Endothelial cell of umbilical vein (primary cell): ENCODE measurements at regions of chr10 and their contacts with region 1.

Region 1: DNA sequence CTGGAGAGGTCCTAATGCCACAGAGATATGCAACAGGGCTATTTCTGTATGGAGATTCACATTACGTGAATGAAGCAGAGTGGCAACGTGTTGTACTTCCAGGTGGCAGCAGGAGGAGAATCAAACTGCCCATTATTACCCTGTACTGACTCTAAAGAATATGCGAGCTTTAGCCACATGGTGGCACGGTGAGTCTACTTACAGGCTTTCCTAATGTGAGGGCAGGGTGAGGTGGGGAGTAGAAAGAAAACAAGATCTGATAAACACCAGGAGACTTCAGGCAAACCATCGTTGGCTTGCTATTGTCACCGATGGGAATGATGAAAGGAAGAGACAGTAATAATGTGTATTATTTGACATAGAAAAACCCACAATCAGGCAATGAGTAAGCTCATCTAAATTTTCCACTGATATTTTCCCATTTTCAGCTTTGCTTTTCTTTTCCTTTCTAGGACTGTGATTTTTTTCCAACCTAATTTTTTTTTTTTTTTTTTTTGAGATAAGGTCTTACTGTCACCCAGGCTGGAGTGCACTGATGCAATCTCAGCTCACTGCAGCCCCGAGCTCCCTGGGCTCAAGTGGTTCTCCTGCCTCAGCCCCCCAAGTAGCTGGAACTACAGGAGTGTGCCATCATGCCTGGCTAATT is 164.3 kb downstream of the BTAF1 start:
- DNase-seq: peak; percentile 91
- H3K4me3 ChIP-seq: no peak overlapping the region
- H3K27ac ChIP-seq: no peak overlapping the region
- H3K4me1 ChIP-seq: no peaks in the 10 kb centered on the region
- H3K27me3 ChIP-seq: no peaks in the 10 kb centered on the region
- CTCF ChIP-seq: peak; percentile 73 to 82
- POLR2A ChIP-seq: no peak

Region 2: DNA sequence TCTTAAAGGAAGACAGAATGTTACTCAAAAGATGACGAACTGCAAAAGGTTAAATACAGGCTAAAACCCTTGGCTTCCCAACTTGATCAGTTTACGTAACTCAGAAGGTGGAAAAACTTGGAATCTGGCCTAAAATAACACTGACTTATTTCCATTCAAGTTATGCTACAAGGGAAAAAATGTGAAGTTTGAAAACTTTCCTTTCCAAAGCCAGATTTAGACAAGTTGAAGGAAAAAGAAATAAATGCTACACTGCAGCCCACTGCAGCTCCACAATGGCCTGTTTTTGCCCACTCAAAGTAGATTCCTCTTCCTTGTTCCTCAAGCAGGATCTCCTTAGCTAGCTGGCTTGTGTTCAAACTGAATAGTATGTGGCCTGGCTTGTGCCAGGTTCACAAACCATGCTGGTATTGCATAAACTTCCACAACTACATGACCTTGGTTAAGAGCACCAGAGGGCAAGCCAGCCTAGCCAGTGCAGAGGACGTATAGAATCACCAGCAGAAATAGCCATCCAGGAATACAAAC is 36.8 kb after region 1 on chr10:
- CTCF ChIA-PET with region 1: interaction called, 10 read pairs
- POLR2A ChIA-PET with region 1: no interaction called
- dilution Hi-C with region 1: no loop called
- intact Hi-C with region 1: no loop called
- DNase-seq: peak; percentile 97
- H3K4me3 ChIP-seq: peak overlapping the region in 1 of 3 experiments; percentile 1
- H3K27ac ChIP-seq: peak overlapping the region; percentile 38
- H3K4me1 ChIP-seq: peaks cover 33% of the 10 kb centered on the region
- H3K27me3 ChIP-seq: no peaks in the 10 kb centered on the region
- CTCF ChIP-seq: no peak
- POLR2A ChIP-seq: no peak

Region 3: DNA sequence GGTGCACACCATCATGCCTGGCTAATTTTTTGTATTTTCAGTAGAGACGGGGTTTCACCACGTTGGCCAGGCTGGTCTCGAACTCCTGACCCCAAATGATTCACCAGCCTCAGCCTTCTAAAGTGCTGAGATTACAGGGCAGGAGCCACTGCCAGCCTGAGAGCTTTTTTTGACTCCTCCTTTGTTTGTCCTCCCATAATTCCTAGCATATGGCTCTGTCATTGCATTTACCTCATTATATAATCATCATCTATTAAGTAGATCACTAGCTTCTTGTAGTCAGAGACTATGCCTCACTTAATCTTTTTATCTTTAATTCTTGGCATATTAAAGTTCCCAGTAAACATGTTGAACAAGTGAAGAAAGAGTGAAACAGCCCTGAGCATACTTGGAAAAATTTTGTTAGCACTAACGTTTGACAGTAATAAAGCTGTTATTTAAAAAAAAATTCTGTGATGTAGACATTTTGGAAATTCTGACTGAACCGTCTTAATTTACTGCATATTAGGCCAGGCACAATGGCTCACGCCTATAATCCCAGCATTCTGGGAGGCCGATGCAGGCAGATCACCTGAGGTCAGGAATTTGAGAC is 121.0 kb after region 1 on chr10:
- CTCF ChIA-PET with region 1: interaction called, 16 read pairs
- POLR2A ChIA-PET with region 1: no interaction called
- dilution Hi-C with region 1: no loop called
- intact Hi-C with region 1: loop called (anchors 5 kb)
- DNase-seq: peak; percentile 15
- H3K4me3 ChIP-seq: no peak overlapping the region
- H3K27ac ChIP-seq: no peak overlapping the region
- H3K4me1 ChIP-seq: peaks cover 10% of the 10 kb centered on the region
- H3K27me3 ChIP-seq: no peaks in the 10 kb centered on the region
- CTCF ChIP-seq: no peak
- POLR2A ChIP-seq: no peak

Region 4: DNA sequence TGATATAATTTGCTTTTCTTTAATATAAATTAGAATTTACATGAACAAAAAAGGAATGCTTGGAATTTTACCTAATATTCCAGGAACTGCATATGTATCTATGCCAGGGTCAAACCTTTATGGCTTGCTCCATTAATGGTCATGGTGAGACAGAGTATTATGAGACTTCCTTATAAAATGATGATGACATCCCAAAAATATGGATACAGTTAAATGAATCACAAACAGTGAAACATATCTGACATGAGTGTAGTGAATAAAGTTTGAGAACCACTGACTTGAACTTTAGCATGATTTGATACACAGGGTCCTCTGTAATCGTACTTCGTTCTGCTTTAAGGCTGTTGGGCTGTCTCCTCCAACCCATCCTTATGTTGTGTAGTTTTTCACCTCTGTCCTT is 254.9 kb after region 1 on chr10:
- CTCF ChIA-PET with region 1: interaction called, 12 read pairs
- POLR2A ChIA-PET with region 1: no interaction called
- dilution Hi-C with region 1: no loop called
- intact Hi-C with region 1: no loop called
- DNase-seq: no peak
- H3K4me3 ChIP-seq: no peak overlapping the region
- H3K27ac ChIP-seq: no peak overlapping the region
- H3K4me1 ChIP-seq: no peaks in the 10 kb centered on the region
- H3K27me3 ChIP-seq: no peaks in the 10 kb centered on the region
- CTCF ChIP-seq: no peak
- POLR2A ChIP-seq: no peak

Region 5: GRCh38 chr10:92432596-92432995 is 344.7 kb after region 1 on chr10:
- CTCF ChIA-PET with region 1: interaction called, 83 read pairs
- POLR2A ChIA-PET with region 1: no interaction called
- dilution Hi-C with region 1: no loop called
- intact Hi-C with region 1: loop called (anchors 1 kb)
- DNase-seq: peak; percentile 48
- H3K4me3 ChIP-seq: no peak overlapping the region
- H3K27ac ChIP-seq: no peak overlapping the region
- H3K4me1 ChIP-seq: peaks cover 10% of the 10 kb centered on the region
- H3K27me3 ChIP-seq: no peaks in the 10 kb centered on the region
- CTCF ChIP-seq: no peak
- POLR2A ChIP-seq: no peak